ENCODE measurements at regions of chr1 and their contacts with region 1.

Region 1: DNA sequence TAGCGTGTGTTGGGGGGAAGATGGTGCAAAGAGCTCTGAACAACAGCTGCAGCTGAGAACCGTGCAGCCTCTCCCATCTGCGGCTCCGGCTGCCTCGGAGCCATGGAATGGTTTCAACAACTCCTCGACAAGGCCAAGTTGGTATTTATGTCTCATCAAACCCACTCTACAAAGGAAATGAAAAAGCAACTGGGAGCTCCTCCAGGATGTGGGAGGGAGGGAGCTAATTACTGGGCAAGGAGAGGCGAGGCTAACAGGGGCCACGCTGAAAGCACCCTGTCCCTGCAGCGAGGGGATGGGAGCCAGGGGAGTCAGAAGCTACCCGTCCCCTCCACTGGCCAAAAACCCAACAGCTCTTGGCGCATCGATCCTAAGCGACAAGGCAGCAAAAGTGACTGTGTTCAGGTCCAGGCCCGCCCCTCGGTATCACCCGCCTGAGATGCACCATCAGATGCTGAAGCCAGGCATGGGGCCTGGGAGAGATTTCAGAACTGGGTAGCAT is 63.1 kb downstream of the ACOT7 start:
- DNase-seq: peak; percentile 83
- H3K4me3 ChIP-seq: no peak overlapping the region
- CTCF ChIP-seq: no peak

Region 2: GRCh38 chr1:6162773-6163172 is 167.7 kb before region 1 on chr1:
- in situ Hi-C with region 1: no loop called
- DNase-seq: no peak
- H3K4me3 ChIP-seq: no peak overlapping the region
- CTCF ChIP-seq: peak; percentile 14

Region 3: DNA sequence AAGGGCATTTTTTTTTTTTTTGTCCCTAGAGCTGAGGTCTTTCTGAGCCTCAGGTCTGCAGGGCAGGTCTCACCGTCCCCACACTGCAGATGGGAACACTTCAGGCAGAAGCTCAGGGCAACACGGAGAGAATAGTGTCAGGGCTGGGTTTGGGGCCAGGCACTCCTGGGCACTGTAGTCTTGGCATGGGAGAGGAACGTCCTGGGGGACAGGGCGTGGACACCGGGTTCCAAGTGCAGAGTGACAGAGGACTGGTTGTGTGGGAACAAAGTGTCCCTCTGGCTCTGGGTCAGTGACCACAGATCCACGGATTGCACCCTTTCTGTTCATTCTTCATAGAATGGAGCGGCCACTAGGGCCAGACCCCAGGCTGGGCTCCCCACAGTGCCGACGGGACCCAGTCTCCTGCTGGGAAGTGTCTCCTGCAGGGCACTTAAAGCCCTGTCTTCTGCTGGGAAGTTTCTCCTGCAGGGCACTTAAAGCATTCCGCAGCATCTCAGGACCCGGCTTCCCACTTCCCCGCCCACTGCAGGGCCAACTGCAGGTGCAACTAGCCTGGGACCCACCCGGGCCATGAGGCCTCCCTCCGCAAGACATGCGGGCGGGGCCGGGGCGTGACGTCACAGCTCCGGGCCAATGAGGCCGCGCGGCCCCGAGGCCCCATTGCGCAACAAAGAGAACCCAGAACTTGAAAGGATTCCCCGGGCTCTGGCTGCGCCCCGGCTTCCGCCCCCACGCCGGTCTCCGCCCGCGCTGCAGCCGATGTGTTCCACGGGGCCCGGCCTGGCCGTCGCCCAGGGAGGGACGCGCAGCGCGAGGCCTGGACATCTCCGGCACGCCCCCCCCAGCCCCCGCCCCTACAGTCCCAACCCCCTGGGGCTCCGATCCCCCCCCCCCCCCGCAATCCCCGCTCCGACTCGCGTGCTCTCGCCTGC is 70.7 kb before region 1 on chr1:
- in situ Hi-C with region 1: loop called (anchors 5 kb)
- DNase-seq: no peak
- H3K4me3 ChIP-seq: peak overlapping the region; percentile 51
- CTCF ChIP-seq: no peak

Measured in astrocyte of the cerebellum (primary cell).